ENCODE measurements at regions of chr6 and their contacts with region 1.

Region 1: GRCh38 chr6:118776607-118777549 is 117.1 kb upstream of the ASF1A start:
- DNase-seq: peak; percentile 78
- ATAC-seq: peak; percentile 87
- H3K4me3 Mint-ChIP-seq: no peak overlapping the region
- H3K27ac Mint-ChIP-seq: no peak overlapping the region
- H3K4me1 Mint-ChIP-seq: peaks cover 13% of the 10 kb centered on the region
- H3K27me3 Mint-ChIP-seq: peaks cover 6% of the 10 kb centered on the region

Region 2: GRCh38 chr6:118565311-118565960 is 211.4 kb before region 1 on chr6:
- CTCF ChIA-PET with region 1: interaction called, 11 read pairs
- DNase-seq: no peak
- ATAC-seq: peak; percentile 91
- H3K4me3 Mint-ChIP-seq: no peak overlapping the region
- H3K27ac Mint-ChIP-seq: no peak overlapping the region
- H3K4me1 Mint-ChIP-seq: peaks cover 7% of the 10 kb centered on the region
- H3K27me3 Mint-ChIP-seq: no peaks in the 10 kb centered on the region

Region 3: DNA sequence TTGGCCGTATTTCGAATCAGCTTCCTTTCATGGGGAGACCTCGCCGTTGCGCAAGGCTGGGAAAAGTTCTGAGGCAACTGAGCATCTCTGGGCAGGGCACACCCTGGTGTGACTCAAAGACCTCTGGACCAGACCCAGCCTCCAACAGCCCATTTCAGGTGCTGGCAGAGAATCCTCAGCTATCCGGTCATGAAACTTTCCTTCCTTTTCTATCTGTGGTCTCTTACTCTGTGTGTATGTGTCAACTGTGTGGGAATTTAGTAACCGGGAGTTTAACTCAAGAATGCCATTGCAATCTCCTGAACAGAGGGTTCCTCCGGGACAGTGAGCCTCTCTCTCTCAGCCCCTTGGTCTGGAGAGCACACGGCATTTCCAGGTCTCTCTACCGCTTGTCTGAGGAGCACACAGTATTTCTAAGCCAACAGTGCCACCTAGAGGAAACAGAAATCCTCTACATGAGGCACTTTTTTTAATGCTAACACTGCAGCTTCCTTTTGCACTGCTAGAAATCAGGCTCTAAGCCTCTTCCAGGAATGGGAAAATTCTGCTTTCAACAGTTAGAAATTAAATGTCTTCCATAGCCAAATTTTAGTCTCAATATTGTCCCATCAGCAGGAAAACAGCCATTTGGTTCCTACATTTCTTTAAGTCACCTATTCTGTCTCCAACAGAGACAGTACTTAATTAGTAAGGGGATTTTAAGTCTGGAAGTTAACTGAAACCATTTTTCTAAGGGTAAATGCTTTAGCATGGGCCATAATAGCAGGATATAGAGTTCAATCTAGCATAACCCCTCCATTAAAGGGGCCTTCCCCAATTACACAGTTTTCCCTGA is 196.1 kb before region 1 on chr6:
- CTCF ChIA-PET with region 1: no interaction called
- DNase-seq: no peak
- ATAC-seq: peak; percentile 61
- H3K4me3 Mint-ChIP-seq: no peak overlapping the region
- H3K27ac Mint-ChIP-seq: no peak overlapping the region
- H3K4me1 Mint-ChIP-seq: peaks cover 2% of the 10 kb centered on the region
- H3K27me3 Mint-ChIP-seq: no peaks in the 10 kb centered on the region

Region 4: DNA sequence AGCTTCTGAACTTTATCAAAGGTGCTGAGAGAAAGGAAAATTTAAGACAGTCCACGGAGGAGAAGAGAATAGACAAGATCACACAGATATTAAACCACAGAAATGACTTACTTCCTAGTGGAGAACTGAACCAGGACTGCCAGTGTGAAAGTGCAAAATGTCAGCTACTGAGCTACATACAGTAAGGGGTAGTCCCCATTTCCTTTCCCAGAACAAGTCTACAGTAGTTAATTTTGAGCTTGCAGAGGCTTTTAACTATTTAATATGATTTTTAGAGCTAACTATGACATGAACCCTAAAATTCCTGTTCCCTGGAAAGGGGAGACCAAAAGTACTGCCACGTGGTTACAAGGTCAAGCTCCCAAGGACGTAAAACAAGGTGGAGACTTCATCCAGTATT is 170.6 kb before region 1 on chr6:
- CTCF ChIA-PET with region 1: no interaction called
- DNase-seq: no peak
- ATAC-seq: no peak
- H3K4me3 Mint-ChIP-seq: no peak overlapping the region
- H3K27ac Mint-ChIP-seq: peak overlapping the region; percentile 46
- H3K4me1 Mint-ChIP-seq: peaks cover 15% of the 10 kb centered on the region
- H3K27me3 Mint-ChIP-seq: no peaks in the 10 kb centered on the region

Region 5: GRCh38 chr6:118748311-118749062 is 28.4 kb before region 1 on chr6:
- CTCF ChIA-PET with region 1: no interaction called
- DNase-seq: no peak
- ATAC-seq: no peak
- H3K4me3 Mint-ChIP-seq: no peak overlapping the region
- H3K27ac Mint-ChIP-seq: no peak overlapping the region
- H3K4me1 Mint-ChIP-seq: peaks cover 8% of the 10 kb centered on the region
- H3K27me3 Mint-ChIP-seq: peaks cover 2% of the 10 kb centered on the region

Region 6: GRCh38 chr6:119129148-119129967 is 352.5 kb after region 1 on chr6:
- CTCF ChIA-PET with region 1: no interaction called
- DNase-seq: no peak
- ATAC-seq: peak; percentile 76
- H3K4me3 Mint-ChIP-seq: no peak overlapping the region
- H3K27ac Mint-ChIP-seq: no peak overlapping the region
- H3K4me1 Mint-ChIP-seq: peaks cover 8% of the 10 kb centered on the region
- H3K27me3 Mint-ChIP-seq: peaks cover 2% of the 10 kb centered on the region

Measured in activated CD8-positive, alpha-beta memory T cell treated with anti-CD3 and anti-CD28 coated beads, Interleukin-2, amount 10 ng/mL, durations not matched to agents 7 days and 5 days (primary cell).